ENCODE measurements at regions of chr17 and their contacts with region 1.

Region 1: DNA sequence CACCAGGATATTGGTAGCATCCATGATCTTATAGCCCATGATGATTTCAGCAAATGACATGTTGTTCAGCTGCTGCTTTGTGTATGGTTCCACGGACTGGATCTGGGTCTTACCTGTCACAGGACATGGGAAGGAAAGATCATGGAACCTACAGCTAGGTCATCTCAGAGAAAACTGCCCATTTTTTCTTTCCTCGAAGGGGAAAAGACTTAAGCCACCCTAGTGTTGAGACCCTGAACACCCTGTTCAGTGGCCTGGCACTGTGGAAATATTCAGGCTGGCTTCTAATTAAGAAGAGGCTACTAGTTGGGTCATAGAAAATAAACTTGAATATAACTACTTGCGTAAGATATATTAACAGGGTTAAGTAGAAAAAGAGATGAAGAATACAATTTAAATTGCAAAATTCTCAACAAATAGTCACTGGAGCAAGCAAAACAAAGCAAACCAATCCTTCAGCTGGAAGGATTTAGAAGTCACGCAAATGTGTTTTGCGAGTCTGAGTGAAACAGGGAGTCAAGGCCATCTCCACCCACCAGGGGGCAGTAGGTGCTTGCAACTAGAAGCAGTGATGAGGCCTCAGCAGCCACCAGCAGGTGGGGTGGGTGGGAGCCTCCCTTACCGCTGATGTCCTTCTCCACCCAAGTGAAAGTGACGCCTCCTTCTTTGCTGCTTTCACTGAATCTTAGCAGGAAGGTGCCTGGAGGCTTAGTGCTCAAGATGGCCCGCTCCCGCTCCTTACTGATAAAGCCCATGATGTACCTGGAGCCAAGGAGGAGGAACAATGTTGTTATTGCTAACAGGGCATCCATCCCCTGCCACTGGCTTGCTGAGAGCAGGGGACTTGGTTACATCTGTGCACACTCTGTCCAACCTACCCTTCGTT is 34.3 kb downstream of the STAT5A start:
- DNase-seq: peak; percentile 87
- CTCF ChIP-seq: peak; percentile 99

Region 2: DNA sequence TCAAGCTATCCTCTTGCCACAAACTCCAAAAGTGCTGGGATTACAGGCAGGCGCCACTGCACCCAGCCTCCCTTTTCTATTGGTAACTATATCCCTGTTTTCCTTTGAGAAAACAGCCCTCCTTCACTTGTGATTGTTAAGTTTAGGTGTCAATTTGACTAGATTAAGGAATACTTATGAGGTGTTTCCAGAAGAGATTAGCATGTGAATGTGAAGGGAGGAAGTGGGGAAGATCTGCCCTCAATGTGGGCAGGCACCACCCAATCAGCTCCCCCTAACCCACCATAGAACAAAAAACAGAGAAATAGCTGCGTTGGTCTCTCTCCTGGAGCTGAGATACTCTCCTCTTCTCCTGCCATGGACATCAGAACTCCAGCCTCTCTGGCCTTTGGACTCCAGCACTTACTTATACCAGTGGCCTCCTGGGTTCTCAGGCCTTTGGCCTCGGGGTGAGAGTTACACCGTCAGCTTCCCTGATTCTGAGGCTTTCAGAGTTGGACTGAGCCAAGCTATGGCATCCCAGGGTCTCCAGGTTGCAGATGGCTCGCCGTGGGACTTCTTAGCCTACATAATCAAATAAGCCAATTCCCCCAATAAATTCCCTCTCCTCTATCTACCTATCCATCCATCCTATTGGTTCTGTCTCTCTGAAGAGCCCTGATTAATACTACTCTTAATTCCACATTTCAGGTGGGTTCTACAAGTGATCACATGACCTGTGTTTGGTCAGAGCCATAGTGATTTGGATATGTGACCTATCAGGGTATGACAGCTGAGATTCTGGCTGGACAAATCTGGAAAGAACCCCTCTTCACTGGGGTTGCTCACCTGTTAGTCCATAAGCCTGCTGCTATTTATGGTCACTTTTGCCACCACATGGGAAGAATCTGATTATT is 77.6 kb after region 1 on chr17:
- in situ Hi-C with region 1: loop called (anchors 5 kb)
- DNase-seq: no peak
- CTCF ChIP-seq: no peak

Region 3: DNA sequence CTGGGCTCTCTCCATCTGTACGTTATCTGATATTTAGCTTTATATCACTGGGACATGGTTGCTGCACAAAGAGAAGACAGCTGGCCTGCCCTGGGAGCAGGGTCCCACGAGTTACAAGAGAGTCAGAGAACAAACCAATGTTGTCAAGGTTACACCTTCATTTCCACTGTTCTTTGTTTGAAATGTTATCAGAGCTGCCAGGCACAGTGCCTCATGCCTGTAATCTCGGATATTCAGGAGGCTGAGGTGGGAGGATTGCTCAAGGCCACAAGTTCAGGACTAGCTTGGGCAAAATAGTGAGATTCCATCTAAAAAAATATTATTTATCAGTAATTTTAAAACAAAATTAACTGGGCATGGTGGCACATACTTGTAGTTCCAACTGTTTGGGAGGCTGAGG is 170.7 kb after region 1 on chr17:
- in situ Hi-C with region 1: no loop called
- DNase-seq: no peak
- CTCF ChIP-seq: no peak

Region 4: GRCh38 chr17:42517516-42517915 is 194.9 kb after region 1 on chr17:
- in situ Hi-C with region 1: loop called (anchors 25 kb)
- DNase-seq: peak; percentile 80
- CTCF ChIP-seq: peak; percentile 93

Measured in GM13977 (cell line).